HEK293 (cell line): ENCODE measurements at regions of chr4 and their contacts with region 1.

Region 1: GRCh38 chr4:77358315-77358928 is 201.4 kb downstream of the CCNG2 start:
- H3K4me3 ChIP-seq: no peak overlapping the region
- H3K27ac ChIP-seq: no peak overlapping the region
- H3K4me1 ChIP-seq: no peaks in the 10 kb centered on the region
- CTCF ChIP-seq: no peak

Region 2: GRCh38 chr4:77347341-77347966 is 11.0 kb before region 1 on chr4:
- CTCF ChIA-PET with region 1: interaction called, 14 read pairs
- POLR2A ChIA-PET with region 1: no interaction called
- H3K4me3 ChIP-seq: no peak overlapping the region
- H3K27ac ChIP-seq: no peak overlapping the region
- H3K4me1 ChIP-seq: no peaks in the 10 kb centered on the region
- CTCF ChIP-seq: no peak